Body of pancreas (tissue), 4 donors: ENCODE measurements at regions of chr19 and their contacts with region 1.

Region 1: DNA sequence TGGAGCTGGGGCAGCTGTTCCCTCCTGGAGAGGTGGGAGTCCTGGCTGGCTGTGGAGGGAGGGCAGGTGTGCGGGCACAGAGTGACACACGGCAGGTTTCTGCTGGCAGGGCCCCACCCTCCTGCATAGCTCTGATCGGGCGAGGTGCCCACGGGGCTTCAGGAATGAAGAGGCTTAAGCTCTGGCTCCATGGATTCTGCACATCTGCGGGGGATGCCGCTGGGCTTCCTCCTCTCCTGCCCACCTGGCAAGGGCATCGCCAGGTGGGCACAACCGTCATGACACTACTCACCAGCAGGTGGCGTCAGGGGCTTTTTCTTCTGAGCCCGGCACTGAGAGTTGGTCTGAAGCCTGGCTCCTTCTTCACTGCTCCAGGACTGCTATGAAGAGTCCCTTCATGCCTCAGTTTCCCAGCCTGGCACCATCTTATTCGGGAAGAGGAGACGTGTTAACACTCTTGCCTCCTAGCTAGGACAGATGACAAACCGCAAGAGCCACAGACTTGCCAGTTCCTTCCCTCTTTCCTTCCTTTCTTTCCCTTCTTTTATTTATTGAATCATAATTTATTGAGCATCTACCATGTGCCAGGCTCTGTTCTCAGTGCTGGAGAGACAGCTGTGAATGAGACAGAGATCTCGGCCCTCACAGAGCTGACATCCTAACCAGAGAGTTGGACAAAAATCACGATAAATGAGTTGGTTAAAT is 15.2 kb upstream of the PAK4 start:
- DNase-seq: peak; percentile 72 to 83 (median 80)
- ATAC-seq: peak; percentile 84
- H3K4me3 ChIP-seq: no peak overlapping the region
- H3K27ac ChIP-seq: no peak overlapping the region
- H3K4me1 ChIP-seq: peaks cover 12% of the 10 kb centered on the region
- H3K27me3 ChIP-seq: no peaks in the 10 kb centered on the region
- CTCF ChIP-seq: peak; percentile 61 to 78 (median 72)
- POLR2A ChIP-seq: no peak

Region 2: GRCh38 chr19:39319892-39320248 is 209.5 kb after region 1 on chr19:
- intact Hi-C with region 1: loop called (anchors 5 kb)
- DNase-seq: no peak
- ATAC-seq: no peak
- H3K4me3 ChIP-seq: peak overlapping the region in 1 of 2 donors; percentile 29
- H3K27ac ChIP-seq: no peak overlapping the region
- H3K4me1 ChIP-seq: peaks cover 12% of the 10 kb centered on the region
- H3K27me3 ChIP-seq: no peaks in the 10 kb centered on the region
- CTCF ChIP-seq: no peak
- POLR2A ChIP-seq: no peak

Region 3: DNA sequence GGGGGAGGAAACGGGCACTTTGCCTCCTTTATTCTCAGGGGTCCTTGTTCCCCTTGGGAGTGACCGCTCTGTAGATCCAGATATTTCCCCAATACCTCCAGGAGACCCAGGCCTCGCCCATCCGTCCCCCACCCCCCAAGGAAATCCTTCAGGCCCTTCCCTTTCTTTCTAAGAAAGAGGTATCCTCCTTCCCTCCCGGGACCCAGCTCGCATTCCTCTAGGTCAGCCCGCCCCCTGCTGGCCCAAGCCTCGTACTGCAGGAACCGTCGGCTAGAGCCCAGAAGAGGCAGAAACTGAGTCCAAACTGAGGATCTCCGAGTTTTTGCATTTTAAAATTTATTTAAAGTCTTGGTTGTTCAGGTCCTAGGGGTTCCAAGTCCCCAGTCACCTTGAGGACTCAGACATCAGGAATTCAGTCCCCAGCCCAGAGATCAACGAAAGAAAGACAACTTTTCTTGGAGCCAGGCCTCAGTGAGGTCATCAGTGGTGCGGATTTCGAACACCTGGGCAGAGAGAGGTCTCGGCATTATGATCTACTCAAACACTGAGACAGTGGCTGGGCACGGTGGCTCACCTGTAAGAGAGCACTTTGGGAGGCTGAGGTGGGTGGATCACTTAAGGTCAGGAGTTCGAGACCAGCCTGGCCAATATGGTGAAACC is 217.8 kb after region 1 on chr19:
- intact Hi-C with region 1: loop called (anchors 5 kb)
- DNase-seq: peak; percentile 85 to 92 (median 90)
- ATAC-seq: peak; percentile 89
- H3K4me3 ChIP-seq: no peak overlapping the region
- H3K27ac ChIP-seq: peak overlapping the region in 1 of 4 donors; percentile 23
- H3K4me1 ChIP-seq: peaks cover 24% of the 10 kb centered on the region
- H3K27me3 ChIP-seq: no peaks in the 10 kb centered on the region
- CTCF ChIP-seq: peak; percentile 91 to 99 (median 96)
- POLR2A ChIP-seq: no peak